Left cardiac atrium (tissue), 4 donors: ENCODE measurements at regions of chr11 and their contacts with region 1.

Region 1: GRCh38 chr11:26297189-26297975 is 34.5 kb upstream of the ANO3 start:
- DNase-seq: no peak
- ATAC-seq: peak; percentile 68 to 71

Region 2: GRCh38 chr11:26649884-26650283 is 352.5 kb after region 1 on chr11:
- intact Hi-C with region 1: loop called in 1 of 2 experiments (anchors 5 kb)
- DNase-seq: peak; percentile 37
- ATAC-seq: peak in 1 of 2 donors; percentile 73

Region 3: DNA sequence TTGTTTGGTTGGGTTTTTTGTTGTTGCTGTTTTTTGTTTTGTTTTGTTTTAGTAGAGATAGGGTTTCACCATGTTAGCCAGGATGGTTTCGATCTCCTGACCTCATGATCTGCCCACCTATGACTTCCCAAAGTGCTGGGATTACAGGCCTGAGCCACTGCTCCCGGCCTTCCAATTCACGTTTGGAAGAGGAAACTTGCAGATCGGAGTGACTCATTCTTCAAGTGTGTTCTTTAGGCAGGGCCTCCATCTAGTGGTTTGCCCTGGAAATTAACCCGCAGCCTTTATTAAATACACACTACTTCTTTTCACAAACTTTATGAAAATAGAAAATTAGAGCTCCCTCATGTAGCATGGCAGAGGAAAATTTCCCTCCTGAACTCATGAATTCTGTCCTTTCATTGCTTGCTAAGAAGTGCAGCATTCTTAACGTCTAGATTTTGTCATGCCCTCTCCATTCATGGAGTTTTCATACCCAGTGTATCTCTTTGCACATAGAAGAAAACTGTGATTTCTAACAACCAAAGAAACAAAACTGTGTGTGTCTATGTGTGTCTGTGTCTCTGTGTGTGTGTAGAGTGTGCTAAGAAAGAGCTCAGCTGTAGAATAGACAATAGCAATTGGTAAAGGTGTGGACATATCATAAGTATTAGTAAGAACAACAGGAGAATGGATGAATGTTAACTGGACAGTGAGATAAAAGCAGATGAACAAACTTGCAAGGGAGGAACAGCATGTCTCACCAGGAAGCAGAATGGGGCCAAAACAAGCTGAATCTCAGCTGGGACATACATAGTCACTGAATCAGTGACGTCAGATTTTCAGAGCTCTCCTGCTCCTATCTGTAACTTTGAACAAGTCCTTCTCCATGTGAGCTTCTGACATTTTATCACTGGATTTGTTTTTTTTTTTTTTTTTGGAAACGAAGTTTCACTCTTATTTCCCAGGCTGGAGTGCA is 861.6 kb after region 1 on chr11:
- intact Hi-C with region 1: loop called (anchors 2 to 10 kb)
- DNase-seq: peak; percentile 23
- ATAC-seq: peak; percentile 83 to 94